Activated CD8-positive, alpha-beta T cell treated with anti-CD3 and anti-CD28 coated beads, Interleukin-2, amount 10 ng/mL, durations not matched to agents 7 days and 5 days (primary cell): ENCODE measurements at regions of chr11 and their contacts with region 1.

Region 1: GRCh38 chr11:86230921-86231430 is 13.6 kb upstream of the EED start:
- DNase-seq: no peak
- ATAC-seq: no peak
- H3K4me3 Mint-ChIP-seq: no peak overlapping the region
- H3K27ac Mint-ChIP-seq: no peak overlapping the region
- H3K4me1 Mint-ChIP-seq: peaks cover 13% of the 10 kb centered on the region
- H3K27me3 Mint-ChIP-seq: no peaks in the 10 kb centered on the region

Region 2: DNA sequence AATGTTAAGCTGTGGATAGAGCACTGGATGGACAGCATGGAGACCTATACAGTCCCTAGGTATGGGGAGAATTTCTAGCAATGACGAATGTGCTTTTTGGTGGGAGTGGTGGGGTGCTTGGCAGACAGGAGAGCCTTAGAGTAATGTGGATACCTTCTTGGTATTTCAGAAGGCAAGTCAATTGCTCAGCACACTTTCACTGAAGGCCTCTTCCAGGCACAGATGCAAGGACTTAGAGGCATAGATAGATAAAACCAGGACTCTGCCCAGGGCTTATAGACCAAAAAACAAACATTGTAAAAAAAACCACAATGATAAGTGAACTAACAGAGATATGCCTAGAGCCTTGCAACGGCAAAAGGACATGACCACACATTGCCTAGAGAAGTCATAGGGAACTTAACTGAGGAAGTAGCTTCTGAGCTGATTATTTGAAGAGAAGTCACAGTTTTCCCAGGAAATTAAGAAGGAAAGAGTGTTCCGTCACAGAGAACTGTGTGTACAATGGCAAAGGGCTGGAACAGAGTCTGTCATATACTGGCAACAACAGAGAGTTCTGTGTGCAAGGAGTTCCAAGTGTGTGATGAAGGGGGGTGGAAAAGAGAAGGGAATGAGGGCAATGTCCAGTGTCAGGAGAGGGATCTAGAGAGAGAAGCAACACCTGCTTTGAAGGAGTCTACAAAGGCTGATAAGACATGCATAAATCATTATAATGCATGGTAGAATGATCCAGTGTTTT is 96.2 kb before region 1 on chr11:
- CTCF ChIA-PET with region 1: no interaction called
- POLR2A ChIA-PET with region 1: no interaction called
- DNase-seq: no peak
- ATAC-seq: no peak
- H3K4me3 Mint-ChIP-seq: no peak overlapping the region
- H3K27ac Mint-ChIP-seq: no peak overlapping the region
- H3K4me1 Mint-ChIP-seq: peaks cover 22% of the 10 kb centered on the region
- H3K27me3 Mint-ChIP-seq: peaks cover under 1% of the 10 kb centered on the region

Region 3: GRCh38 chr11:86244522-86245368 is 13.8 kb after region 1 on chr11 and contains the start of gene EED:
- CTCF ChIA-PET with region 1: interaction called, 14 read pairs
- POLR2A ChIA-PET with region 1: interaction called, 5 read pairs
- DNase-seq: peak; percentile 95
- ATAC-seq: peak; percentile 84
- H3K4me3 Mint-ChIP-seq: no peak within 1 kb of the TSS
- H3K27ac Mint-ChIP-seq: no peak within 1 kb of the TSS
- H3K4me1 Mint-ChIP-seq: peaks cover 38% of the 10 kb centered on the region
- H3K27me3 Mint-ChIP-seq: no peaks in the 10 kb centered on the region
- total RNA-seq, gene EED: 44.8 to 48.3 TPM

Region 4: GRCh38 chr11:86274503-86274902 is 43.5 kb after region 1 on chr11:
- CTCF ChIA-PET with region 1: no interaction called
- POLR2A ChIA-PET with region 1: no interaction called
- DNase-seq: no peak
- ATAC-seq: no peak
- H3K4me3 Mint-ChIP-seq: no peak overlapping the region
- H3K27ac Mint-ChIP-seq: no peak overlapping the region
- H3K4me1 Mint-ChIP-seq: peaks cover 7% of the 10 kb centered on the region
- H3K27me3 Mint-ChIP-seq: no peaks in the 10 kb centered on the region